A549 (cell line): ENCODE measurements at regions of chr1 and their contacts with region 1.

Region 1: GRCh38 chr1:150813058-150813707 is 5.1 kb upstream of the CTSK start:
- DNase-seq: peak; percentile 69 to 75
- ATAC-seq: peak; percentile 97 to 98
- H3K4me3 ChIP-seq: no peak overlapping the region
- H3K27ac ChIP-seq: no peak overlapping the region
- H3K4me1 ChIP-seq: no peaks in the 10 kb centered on the region
- CTCF ChIP-seq: peak; percentile 76
- EP300 ChIP-seq: no peak
- POLR2A ChIP-seq: no peak
- RAD21 ChIP-seq: peak; percentile 84 to 90

Region 2: GRCh38 chr1:150621497-150622302 is 191.5 kb before region 1 on chr1:
- CTCF ChIA-PET with region 1: interaction called, 25 read pairs
- POLR2A ChIA-PET with region 1: no interaction called
- DNase-seq: peak; percentile 62 to 64
- ATAC-seq: peak in 1 of 2 experiments; percentile 35; a peak in 2 of 6 replicates
- H3K4me3 ChIP-seq: no peak overlapping the region
- H3K27ac ChIP-seq: peak overlapping the region in 1 of 2 experiments; percentile 50; a peak in 5 of 6 replicates
- H3K4me1 ChIP-seq: peaks cover 16% of the 10 kb centered on the region
- CTCF ChIP-seq: peak; percentile 66
- EP300 ChIP-seq: no peak
- POLR2A ChIP-seq: no peak
- RAD21 ChIP-seq: peak; percentile 60 to 61

Region 3: DNA sequence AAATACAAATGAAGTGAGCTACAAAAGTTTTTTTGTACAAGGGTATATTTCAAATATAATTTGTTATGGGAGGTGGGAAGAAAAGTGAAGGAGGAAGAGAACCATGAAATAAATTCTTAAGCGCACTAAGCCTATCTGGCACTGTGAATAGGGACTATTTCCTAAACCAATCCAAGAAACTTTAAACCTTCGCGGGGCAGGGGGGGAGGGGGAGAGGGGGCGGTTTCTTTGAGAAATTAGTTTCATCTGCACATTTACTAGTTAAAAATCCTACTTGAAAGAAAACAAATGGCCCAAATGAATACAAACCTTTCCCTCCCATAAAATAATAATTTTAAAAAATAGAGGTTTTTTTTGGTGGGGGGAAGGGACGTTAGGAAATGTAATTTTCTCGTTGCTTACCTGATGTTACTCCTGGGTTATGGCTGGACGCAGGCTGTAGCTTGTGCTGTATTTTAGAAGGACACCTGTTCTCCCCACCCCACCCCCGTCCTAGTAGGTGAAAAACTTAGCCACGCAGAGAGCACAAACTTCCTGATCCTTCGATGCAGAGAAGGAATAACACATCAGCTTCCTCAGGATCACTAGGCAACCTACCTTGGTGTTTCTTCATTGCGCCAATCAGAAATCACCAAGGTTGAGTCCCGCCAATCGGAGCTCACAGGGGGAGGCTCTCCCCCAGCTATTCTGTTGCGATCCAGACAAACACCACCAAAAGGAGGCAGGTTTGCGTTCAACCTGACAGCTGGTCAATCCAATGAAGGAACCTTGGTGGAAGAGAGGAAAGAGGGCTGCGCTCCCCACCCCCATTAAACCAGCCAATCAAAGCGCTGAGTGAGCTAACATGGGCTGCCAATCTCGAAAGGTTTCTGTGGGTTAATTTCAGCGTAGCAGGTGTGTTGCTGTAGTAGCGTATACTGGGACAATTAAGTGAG is 116.3 kb before region 1 on chr1 and contains the start of gene GOLPH3L:
- CTCF ChIA-PET with region 1: interaction called, 15 read pairs
- POLR2A ChIA-PET with region 1: no interaction called
- DNase-seq: peak; percentile 92 to 98
- ATAC-seq: peak; percentile 100
- H3K4me3 ChIP-seq: peak within 1 kb of the TSS; percentile 66
- H3K27ac ChIP-seq: peak within 1 kb of the TSS; percentile 75 to 88
- H3K4me1 ChIP-seq: peaks cover 13% of the 10 kb centered on the region; the same call in 2 of the 3 replicates
- CTCF ChIP-seq: no peak
- EP300 ChIP-seq: no peak
- POLR2A ChIP-seq: 0 out of 2 replicates have a peak, but pooled peaks have one; percentile 40
- RAD21 ChIP-seq: no peak
- polyA plus RNA-seq, gene GOLPH3L: 34.9 and 41.8 TPM in 2 replicates

Region 4: DNA sequence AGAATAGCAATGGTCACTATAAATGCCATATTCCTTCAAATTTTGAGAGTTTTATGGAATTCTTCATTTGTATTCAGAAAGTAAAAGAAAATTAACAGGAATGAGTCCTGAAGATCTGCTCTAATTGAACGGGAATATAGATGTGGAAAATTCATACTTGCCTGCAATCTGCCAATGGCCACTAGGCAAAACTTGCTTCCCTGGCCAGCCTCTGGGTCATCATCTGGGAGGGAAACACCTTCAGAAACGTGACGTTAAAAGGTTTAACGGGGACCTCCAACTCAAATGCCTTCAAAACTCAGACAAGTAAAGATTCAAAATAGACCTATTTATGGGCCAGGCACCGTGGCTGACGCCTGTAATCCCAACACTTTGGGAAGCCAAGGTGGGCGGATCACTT is 16.6 kb after region 1 on chr1:
- CTCF ChIA-PET with region 1: interaction called, 11 read pairs
- POLR2A ChIA-PET with region 1: no interaction called
- DNase-seq: peak; percentile 12 to 17
- ATAC-seq: peak in 1 of 2 experiments; percentile 73; a peak in 3 of 6 replicates
- H3K4me3 ChIP-seq: no peak overlapping the region
- H3K27ac ChIP-seq: no peak overlapping the region
- H3K4me1 ChIP-seq: no peaks in the 10 kb centered on the region
- CTCF ChIP-seq: no peak
- EP300 ChIP-seq: no peak
- POLR2A ChIP-seq: no peak
- RAD21 ChIP-seq: 0 out of 5 replicates have a peak, but pooled peaks of 1 of the 2 experiments have one; percentile 4